ENCODE measurements at regions of chr7 and their contacts with region 1.

Region 1: DNA sequence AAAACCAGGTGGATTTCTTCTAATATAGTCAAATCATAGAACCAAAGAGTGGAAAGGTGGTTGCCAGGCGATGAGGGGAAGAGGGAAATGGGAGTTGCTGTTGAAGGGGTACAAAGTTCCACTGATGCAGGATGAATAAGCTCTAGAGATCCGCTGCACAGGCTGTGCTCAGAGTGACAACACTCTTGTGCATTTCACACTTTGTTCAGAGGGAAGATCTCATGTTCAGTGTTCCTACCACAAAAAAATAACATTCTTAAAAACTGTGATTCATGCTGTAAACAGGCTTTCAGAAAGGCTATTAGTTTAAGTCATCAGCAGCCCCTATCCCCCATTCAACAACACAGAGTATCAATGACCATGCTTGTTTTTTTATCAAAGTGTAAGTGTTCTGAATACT is 213.8 kb downstream of the COBL start:
- DNase-seq: no peak
- H3K4me3 ChIP-seq: no peak overlapping the region
- H3K27ac ChIP-seq: no peak overlapping the region
- H3K4me1 ChIP-seq: no peaks in the 10 kb centered on the region
- H3K27me3 ChIP-seq: no peaks in the 10 kb centered on the region
- CTCF ChIP-seq: no peak
- EP300 ChIP-seq: no peak
- POLR2A ChIP-seq: no peak

Region 2: DNA sequence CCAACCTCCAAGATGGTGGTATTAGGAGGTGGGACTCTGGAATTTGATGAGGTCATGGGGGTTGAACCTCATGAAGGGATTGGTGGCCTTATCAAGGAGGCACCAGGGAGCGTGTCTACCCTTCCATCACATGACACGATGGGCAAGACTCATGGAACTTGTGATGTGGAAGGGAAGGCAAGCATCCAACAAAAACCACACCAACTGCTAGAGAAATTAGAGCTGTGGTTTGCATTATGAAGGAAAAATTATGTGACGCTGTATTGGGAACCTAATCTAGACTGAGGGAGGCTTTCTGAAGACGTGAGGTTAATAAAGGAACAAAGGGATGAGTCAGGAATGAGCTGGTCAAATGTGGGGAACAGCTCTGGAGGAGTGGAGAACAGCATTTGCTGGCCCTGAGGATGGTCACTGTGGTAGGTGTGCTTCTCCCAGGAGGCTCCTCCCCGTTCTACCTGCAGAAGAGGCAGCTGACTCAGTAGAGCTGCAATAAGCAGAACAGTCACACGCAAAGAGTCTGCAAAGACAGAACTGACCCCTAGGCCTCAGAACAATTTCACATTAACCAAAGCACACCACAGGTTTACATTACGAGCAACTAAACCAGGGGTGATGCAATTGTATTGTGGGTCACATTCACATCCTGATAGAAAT is 83.5 kb before region 1 on chr7:
- intact Hi-C with region 1: no loop called
- DNase-seq: no peak
- H3K4me3 ChIP-seq: no peak overlapping the region
- H3K27ac ChIP-seq: no peak overlapping the region
- H3K4me1 ChIP-seq: no peaks in the 10 kb centered on the region
- H3K27me3 ChIP-seq: no peaks in the 10 kb centered on the region
- CTCF ChIP-seq: no peak
- EP300 ChIP-seq: no peak
- POLR2A ChIP-seq: no peak

Region 3: DNA sequence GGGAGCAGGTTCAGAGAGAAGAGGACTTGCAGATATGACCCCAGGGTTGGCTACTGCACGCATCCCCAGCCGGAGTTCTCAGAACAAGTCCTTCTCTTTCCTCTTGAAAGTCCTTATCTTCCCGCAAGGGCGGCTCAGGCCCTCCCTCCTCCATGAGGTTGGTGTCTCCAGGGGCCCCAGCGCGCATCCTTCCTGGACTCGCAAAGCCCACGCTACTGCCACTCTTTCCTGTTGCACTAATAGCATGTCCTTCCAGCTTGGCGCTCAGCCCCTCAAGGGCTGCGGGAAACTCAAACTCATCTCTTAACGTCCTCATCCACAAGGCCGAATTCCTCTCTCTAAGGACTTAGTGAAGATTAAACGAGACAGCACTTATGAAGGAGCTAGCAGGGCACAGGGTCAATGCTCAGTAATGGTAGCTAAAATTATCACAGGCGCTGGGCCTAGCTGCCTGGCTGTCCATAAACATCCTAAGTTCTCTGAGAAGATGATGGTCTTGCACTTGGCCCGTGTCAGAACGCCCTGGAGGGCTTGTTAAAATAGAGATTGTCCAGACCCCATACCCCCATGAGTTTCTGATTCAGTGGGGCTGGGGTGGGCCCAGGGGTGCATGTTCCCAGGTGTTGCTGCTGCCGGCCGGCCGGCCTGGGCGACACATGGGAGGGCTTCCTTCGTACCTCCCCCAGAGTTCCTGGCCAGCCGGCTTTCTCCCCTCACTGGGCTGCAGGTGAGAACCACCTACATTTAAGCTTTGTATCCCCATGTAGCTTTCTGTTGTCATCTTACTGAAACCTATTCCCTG is 47.6 kb before region 1 on chr7:
- intact Hi-C with region 1: loop called in 1 of 4 experiments (anchors 10 kb)
- DNase-seq: no peak
- H3K4me3 ChIP-seq: no peak overlapping the region
- H3K27ac ChIP-seq: no peak overlapping the region
- H3K4me1 ChIP-seq: no peaks in the 10 kb centered on the region
- H3K27me3 ChIP-seq: no peaks in the 10 kb centered on the region
- CTCF ChIP-seq: no peak
- EP300 ChIP-seq: no peak
- POLR2A ChIP-seq: no peak